IMR-90 (cell line): ENCODE measurements at regions of chr10 and their contacts with region 1.

Region 1: DNA sequence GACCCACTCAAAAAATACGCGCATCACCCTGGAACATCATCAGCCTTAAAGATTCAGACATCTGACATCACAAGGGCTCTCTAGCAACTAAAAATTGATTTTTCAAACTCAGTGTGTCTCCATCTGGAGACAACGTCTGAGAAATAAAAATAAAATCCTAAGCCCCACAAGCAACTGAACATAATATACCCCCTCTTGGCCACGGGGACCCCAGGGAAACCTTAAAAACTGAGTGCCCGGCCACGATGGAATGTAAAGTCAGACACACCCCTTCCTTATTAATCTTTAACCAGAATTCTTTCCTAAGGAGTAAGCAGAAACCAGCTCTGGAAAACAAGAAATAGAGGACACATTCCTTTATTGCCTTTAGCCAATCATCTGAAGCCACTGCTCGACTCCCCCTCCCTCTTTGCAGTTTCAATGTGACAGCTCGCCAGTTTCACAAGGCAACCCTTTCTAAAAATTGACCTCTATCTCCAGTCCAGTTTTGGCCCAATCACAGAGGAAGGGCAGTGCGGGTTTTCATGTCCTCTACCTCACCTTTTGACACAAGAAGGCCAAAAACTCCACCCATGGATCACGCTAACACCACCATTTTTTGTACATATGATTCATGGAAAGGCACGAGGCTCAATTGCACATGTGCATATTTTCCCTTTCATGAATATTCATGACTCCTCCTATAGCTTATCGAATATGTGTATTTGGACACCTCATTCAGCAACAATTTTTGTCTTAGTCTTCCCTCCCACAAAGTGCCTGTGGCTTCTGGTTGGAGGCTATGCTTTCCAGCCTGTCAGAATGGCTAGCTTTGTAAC is 24.2 kb downstream of the IFIT3 start:
- DNase-seq: peak; percentile 98
- ATAC-seq: peak; percentile 92
- H3K4me3 ChIP-seq: peak overlapping the region; percentile 31
- H3K27ac ChIP-seq: peak overlapping the region; percentile 93
- H3K4me1 ChIP-seq: peaks cover 21% of the 10 kb centered on the region
- H3K27me3 ChIP-seq: no peaks in the 10 kb centered on the region
- CTCF ChIP-seq: no peak
- POLR2A ChIP-seq: no peak; the same call in 1 of the 2 replicates
- RAD21 ChIP-seq: no peak

Region 2: GRCh38 chr10:89262086-89263051 is 89.6 kb before region 1 on chr10:
- CTCF ChIA-PET with region 1: no interaction called
- POLR2A ChIA-PET with region 1: interaction called, 10 read pairs
- dilution Hi-C with region 1: no loop called
- in situ Hi-C with region 1: no loop called
- intact Hi-C with region 1: no loop called
- DNase-seq: peak; percentile 19
- ATAC-seq: 0 out of 2 replicates have a peak, but pooled peaks have one; percentile 10
- H3K4me3 ChIP-seq: no peak overlapping the region
- H3K27ac ChIP-seq: no peak overlapping the region
- H3K4me1 ChIP-seq: peaks cover 7% of the 10 kb centered on the region
- H3K27me3 ChIP-seq: no peaks in the 10 kb centered on the region
- CTCF ChIP-seq: no peak
- POLR2A ChIP-seq: no peak
- RAD21 ChIP-seq: no peak

Region 3: DNA sequence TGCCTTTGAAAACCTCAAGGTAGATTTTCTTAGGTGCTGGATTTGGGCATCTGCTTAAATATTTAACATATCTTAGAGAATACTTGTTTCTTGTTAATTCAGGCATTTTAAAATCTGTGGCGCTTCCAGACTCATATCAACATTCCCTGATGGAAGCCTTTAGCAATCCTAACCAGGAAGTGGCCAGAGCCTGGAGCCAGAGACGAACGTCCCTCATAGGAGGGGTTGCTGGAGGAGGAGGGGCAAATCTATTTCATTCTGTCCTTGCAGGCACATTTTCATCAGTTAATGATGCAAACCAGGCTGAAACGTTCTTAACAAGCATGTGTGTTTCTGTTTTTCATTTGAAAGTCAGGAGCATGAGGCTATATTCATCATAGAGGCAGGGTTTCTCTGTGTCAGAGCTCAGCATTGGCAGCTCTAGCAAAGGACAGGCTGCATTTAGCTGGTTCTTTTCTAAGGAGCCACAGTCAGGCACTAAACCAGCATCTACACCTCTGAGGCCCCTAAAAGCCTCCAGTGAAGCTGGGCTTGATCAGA is 68.0 kb before region 1 on chr10:
- CTCF ChIA-PET with region 1: no interaction called
- POLR2A ChIA-PET with region 1: no interaction called
- dilution Hi-C with region 1: no loop called
- in situ Hi-C with region 1: no loop called
- intact Hi-C with region 1: loop called (anchors 5 kb)
- DNase-seq: peak; percentile 81
- ATAC-seq: peak; percentile 94
- H3K4me3 ChIP-seq: peak overlapping the region; percentile 1; the same call in 1 of the 2 replicates
- H3K27ac ChIP-seq: peak overlapping the region; percentile 85
- H3K4me1 ChIP-seq: peaks cover 23% of the 10 kb centered on the region
- H3K27me3 ChIP-seq: no peaks in the 10 kb centered on the region
- CTCF ChIP-seq: no peak
- POLR2A ChIP-seq: no peak
- RAD21 ChIP-seq: no peak

Region 4: DNA sequence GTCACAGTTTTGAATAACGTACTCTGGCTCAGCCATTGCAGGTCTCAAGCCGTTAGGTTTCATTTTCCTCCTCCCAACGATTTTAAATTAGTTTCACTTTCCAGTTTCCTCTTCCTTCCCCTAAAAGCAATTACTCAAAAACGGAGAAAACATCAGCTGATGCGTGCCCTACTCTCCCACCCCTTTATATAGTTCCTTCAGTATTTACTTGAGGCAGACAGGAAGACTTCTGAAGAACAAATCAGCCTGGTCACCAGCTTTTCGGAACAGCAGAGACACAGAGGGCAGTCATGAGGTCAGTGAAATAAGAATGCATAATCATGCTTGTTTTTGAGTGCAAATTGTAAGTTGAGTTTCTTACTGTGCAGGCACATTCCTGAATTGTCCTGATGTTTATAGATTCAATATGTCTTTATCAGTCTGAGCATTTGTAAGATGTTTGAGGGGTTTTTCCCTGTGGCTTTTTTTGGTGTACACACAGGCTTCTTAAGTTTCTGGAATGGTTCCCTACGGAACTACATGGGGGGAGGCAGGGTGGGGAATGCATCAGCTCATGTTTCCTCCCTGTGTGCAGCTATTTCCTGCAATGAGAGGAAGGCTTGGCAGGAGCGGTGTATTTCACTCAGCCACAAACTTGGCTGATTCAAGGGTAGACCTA is 24.1 kb before region 1 on chr10 and contains the start of gene IFIT3:
- CTCF ChIA-PET with region 1: interaction called, 3 read pairs
- POLR2A ChIA-PET with region 1: no interaction called
- dilution Hi-C with region 1: no loop called
- in situ Hi-C with region 1: no loop called
- intact Hi-C with region 1: loop called (anchors 1 kb)
- DNase-seq: peak; percentile 96
- ATAC-seq: peak; percentile 92
- H3K4me3 ChIP-seq: peak within 1 kb of the TSS; percentile 54
- H3K27ac ChIP-seq: peak within 1 kb of the TSS; percentile 88
- H3K4me1 ChIP-seq: peaks cover 7% of the 10 kb centered on the region
- H3K27me3 ChIP-seq: no peaks in the 10 kb centered on the region
- CTCF ChIP-seq: no peak
- POLR2A ChIP-seq: no peak
- RAD21 ChIP-seq: no peak
- total RNA-seq, gene IFIT3: 7.3 and 7.8 TPM in 2 replicates

Region 5: GRCh38 chr10:89574368-89574767 is 222.4 kb after region 1 on chr10:
- CTCF ChIA-PET with region 1: no interaction called
- POLR2A ChIA-PET with region 1: no interaction called
- dilution Hi-C with region 1: no loop called
- in situ Hi-C with region 1: no loop called
- intact Hi-C with region 1: no loop called
- DNase-seq: no peak
- ATAC-seq: no peak; the same call in 1 of the 2 replicates
- H3K4me3 ChIP-seq: no peak overlapping the region
- H3K27ac ChIP-seq: no peak overlapping the region
- H3K4me1 ChIP-seq: peaks cover 3% of the 10 kb centered on the region; the same call in 1 of the 2 replicates
- H3K27me3 ChIP-seq: no peaks in the 10 kb centered on the region
- CTCF ChIP-seq: no peak
- POLR2A ChIP-seq: no peak
- RAD21 ChIP-seq: no peak

Region 6: DNA sequence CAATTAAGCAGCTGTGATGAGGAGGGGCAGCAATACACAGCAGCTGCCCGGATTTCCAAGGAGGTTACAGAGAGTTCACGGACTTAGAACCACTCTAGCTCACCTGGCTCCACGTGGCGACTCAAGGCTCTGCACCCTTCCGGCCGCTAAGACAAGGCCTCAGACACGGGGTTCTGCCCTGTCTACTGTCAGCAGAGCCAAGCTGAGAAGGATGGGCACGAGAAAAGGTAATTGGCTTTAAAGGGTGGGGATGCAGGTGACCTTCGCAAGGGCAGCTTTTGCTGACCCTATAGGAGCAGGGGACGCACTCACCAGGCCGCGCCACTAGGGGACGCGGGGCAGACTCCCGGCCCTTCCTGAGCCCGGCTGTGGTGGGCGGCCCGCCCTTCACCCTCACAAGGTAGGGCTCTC is 501.8 kb after region 1 on chr10:
- CTCF ChIA-PET with region 1: no interaction called
- POLR2A ChIA-PET with region 1: no interaction called
- dilution Hi-C with region 1: no loop called
- in situ Hi-C with region 1: no loop called
- intact Hi-C with region 1: no loop called
- DNase-seq: no peak
- ATAC-seq: no peak
- H3K4me3 ChIP-seq: no peak overlapping the region
- H3K27ac ChIP-seq: no peak overlapping the region
- H3K4me1 ChIP-seq: no peaks in the 10 kb centered on the region
- H3K27me3 ChIP-seq: peaks cover 6% of the 10 kb centered on the region
- CTCF ChIP-seq: no peak
- POLR2A ChIP-seq: no peak
- RAD21 ChIP-seq: no peak